GM12878 (cell line): ENCODE measurements at regions of chr15 and their contacts with region 1.

Region 1: DNA sequence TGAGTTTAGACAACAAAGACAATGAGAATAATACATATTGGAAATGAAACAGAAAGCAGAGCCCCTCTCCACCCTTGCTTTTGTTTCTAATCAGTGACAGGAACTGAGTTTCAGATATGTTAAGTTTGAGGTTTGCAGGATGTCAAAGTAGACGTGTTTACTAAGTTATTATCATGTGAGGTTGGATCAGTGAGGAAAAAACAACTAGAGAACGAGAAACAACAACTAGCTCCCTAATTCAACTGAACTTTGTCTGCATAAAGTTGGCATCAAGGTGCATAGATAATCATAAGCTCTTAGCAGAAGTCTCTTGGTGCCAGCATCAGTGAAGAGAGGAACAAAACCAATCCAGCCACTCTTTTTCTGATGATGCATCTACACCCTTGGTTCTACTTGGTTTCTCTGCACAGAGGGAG is 491.1 kb upstream of the NR2F2 start:
- DNase-seq: peak; percentile 66
- ATAC-seq: peak; percentile 95
- H3K4me3 ChIP-seq: no peak overlapping the region
- H3K27ac ChIP-seq: no peak overlapping the region; the same call in 1 of the 2 replicates
- H3K4me1 ChIP-seq: peaks cover 5% of the 10 kb centered on the region; the same call in 1 of the 2 replicates
- H3K27me3 ChIP-seq: no peaks in the 10 kb centered on the region
- CTCF ChIP-seq: no peak
- EP300 ChIP-seq: peak; percentile 42 to 79; a peak in 3 of 4 replicates
- POLR2A ChIP-seq: no peak
- RAD21 ChIP-seq: no peak

Region 2: GRCh38 chr15:95826412-95827195 is 12.8 kb before region 1 on chr15:
- CTCF ChIA-PET with region 1: interaction called, 3 read pairs
- POLR2A ChIA-PET with region 1: no interaction called
- RAD21 ChIA-PET with region 1: interaction called, 13 read pairs
- SMC1A ChIA-PET with region 1: interaction called, 6 read pairs
- in situ Hi-C with region 1: no loop called
- intact Hi-C with region 1: no loop called
- DNase-seq: no peak
- ATAC-seq: peak; percentile 77
- H3K4me3 ChIP-seq: no peak overlapping the region
- H3K27ac ChIP-seq: no peak overlapping the region
- H3K4me1 ChIP-seq: no peaks in the 10 kb centered on the region
- H3K27me3 ChIP-seq: no peaks in the 10 kb centered on the region
- CTCF ChIP-seq: peak; percentile 33 to 45 (median 35); a peak in 4 of 6 replicates
- EP300 ChIP-seq: no peak
- POLR2A ChIP-seq: no peak
- RAD21 ChIP-seq: peak; percentile 62

Region 3: DNA sequence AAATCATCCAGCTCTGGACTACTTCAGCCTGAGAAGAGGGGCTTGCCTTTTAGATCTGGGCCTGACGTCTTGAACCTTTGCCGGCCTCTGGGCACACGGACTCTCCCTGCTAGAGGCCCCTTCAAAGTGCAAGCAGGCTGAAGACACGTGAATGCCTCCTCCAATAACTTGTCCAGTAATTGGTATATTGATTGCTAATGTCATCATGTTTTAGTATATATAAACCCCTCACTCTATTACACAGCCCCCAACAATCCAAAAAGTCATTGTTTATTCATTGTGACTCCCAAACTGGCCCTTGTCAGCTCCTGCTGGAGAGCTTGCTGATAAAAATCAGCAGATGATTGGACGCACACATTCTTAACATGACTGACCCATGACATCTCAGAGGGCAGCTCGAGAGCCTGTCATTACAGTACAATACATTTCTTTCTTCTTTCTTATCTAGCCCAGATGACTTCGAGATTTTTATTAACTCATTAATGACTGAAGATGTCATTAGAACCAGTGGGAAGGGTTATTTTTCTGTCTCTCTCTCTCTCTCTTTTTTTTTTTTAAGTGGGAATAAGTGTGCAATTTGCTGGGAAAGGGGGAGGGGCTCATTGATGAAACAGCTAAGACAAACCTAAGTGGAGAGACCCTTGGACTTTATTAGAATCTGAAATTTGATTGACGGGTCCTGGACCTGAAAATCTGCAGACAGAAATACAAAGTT is 425.6 kb after region 1 on chr15:
- CTCF ChIA-PET with region 1: no interaction called
- POLR2A ChIA-PET with region 1: no interaction called
- RAD21 ChIA-PET with region 1: no interaction called
- SMC1A ChIA-PET with region 1: no interaction called
- in situ Hi-C with region 1: no loop called
- intact Hi-C with region 1: no loop called
- DNase-seq: no peak
- ATAC-seq: no peak
- H3K4me3 ChIP-seq: no peak overlapping the region
- H3K27ac ChIP-seq: no peak overlapping the region
- H3K4me1 ChIP-seq: no peaks in the 10 kb centered on the region
- H3K27me3 ChIP-seq: no peaks in the 10 kb centered on the region
- CTCF ChIP-seq: no peak
- EP300 ChIP-seq: no peak
- POLR2A ChIP-seq: no peak
- RAD21 ChIP-seq: no peak

Region 4: GRCh38 chr15:96392380-96393208 is 553.2 kb after region 1 on chr15:
- CTCF ChIA-PET with region 1: no interaction called
- POLR2A ChIA-PET with region 1: no interaction called
- RAD21 ChIA-PET with region 1: no interaction called
- SMC1A ChIA-PET with region 1: no interaction called
- in situ Hi-C with region 1: no loop called
- intact Hi-C with region 1: no loop called
- DNase-seq: no peak
- ATAC-seq: peak; percentile 45
- H3K4me3 ChIP-seq: no peak overlapping the region
- H3K27ac ChIP-seq: no peak overlapping the region
- H3K4me1 ChIP-seq: no peaks in the 10 kb centered on the region
- H3K27me3 ChIP-seq: no peaks in the 10 kb centered on the region
- CTCF ChIP-seq: no peak
- EP300 ChIP-seq: no peak
- POLR2A ChIP-seq: no peak
- RAD21 ChIP-seq: no peak

Region 5: DNA sequence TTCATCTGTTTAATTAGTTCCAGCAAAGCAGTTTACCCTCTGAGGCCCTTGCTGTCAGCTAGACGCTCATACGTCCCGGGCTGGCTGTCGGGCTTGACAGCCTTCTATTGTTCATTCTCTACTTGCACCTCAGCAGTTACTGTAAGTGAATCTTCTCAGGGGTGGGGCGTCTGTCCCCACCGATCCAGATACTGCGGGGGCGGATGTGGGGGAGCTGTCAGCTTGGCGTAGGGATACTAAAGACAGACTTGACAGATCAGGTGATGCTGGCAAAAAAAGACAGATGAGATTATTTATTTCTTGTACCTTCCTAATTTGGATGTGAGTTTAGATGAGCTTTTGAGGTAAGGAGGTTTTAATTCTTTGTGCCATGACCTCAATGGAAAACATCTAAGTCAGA is 806.4 kb after region 1 on chr15:
- CTCF ChIA-PET with region 1: no interaction called
- POLR2A ChIA-PET with region 1: no interaction called
- RAD21 ChIA-PET with region 1: no interaction called
- SMC1A ChIA-PET with region 1: no interaction called
- in situ Hi-C with region 1: no loop called
- intact Hi-C with region 1: no loop called
- DNase-seq: no peak
- ATAC-seq: no peak
- H3K4me3 ChIP-seq: no peak overlapping the region
- H3K27ac ChIP-seq: no peak overlapping the region
- H3K4me1 ChIP-seq: no peaks in the 10 kb centered on the region
- H3K27me3 ChIP-seq: no peaks in the 10 kb centered on the region
- CTCF ChIP-seq: no peak
- EP300 ChIP-seq: no peak
- POLR2A ChIP-seq: no peak
- RAD21 ChIP-seq: no peak